ENCODE measurements at regions of chr1 and their contacts with region 1.

Region 1: DNA sequence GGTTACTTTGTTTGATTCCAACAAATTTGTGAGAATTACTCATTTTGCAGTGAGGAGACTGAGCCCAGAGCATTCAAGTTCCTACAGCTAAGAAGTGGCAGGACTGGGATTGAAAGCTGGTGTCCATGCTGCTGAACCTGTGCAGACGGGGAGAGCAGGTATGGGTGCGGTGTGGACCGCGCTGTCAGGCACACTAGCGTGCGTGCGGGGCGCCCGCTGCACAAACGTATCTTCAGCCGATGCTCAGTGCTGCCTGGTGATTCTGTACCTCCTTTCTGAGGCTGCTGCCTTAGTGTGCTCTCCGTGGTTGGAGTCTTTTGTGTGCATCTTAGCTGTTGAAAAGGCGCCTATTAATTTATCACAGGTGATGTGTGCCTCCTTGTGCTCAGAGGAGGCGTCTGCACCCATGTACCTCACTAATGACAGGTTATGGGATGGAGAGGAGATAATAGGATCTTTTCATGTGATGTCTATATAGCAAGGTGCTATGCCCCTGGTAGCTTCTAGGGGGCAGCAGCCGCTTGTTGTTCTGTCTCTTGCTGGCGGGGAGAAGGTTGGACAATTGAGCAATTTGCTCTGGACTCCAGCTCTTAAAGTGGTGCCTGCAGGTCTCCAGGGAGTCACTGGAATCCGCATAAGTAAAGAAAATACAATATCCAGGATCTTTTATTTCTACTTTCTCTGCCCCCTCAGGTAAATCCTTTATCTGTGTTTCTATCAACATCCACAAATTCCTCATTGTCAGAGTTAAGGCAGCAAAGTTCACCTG is 32.5 kb downstream of the PEX14 start:
- DNase-seq: peak; percentile 86
- H3K4me3 Mint-ChIP-seq: no peak overlapping the region
- H3K27ac Mint-ChIP-seq: no peak overlapping the region
- H3K4me1 Mint-ChIP-seq: peaks cover 17% of the 10 kb centered on the region
- H3K27me3 Mint-ChIP-seq: no peaks in the 10 kb centered on the region
- CTCF ChIP-seq: peak; percentile 83

Region 2: GRCh38 chr1:10522322-10522860 is 15.1 kb after region 1 on chr1:
- CTCF ChIA-PET with region 1: interaction called, 7 read pairs
- POLR2A ChIA-PET with region 1: interaction called, 14 read pairs
- intact Hi-C with region 1: no loop called
- DNase-seq: no peak
- H3K4me3 Mint-ChIP-seq: no peak overlapping the region
- H3K27ac Mint-ChIP-seq: no peak overlapping the region
- H3K4me1 Mint-ChIP-seq: peaks cover 4% of the 10 kb centered on the region
- H3K27me3 Mint-ChIP-seq: no peaks in the 10 kb centered on the region
- CTCF ChIP-seq: no peak

Region 3: GRCh38 chr1:10635085-10635896 is 128.0 kb after region 1 on chr1:
- CTCF ChIA-PET with region 1: interaction called, 3 read pairs
- POLR2A ChIA-PET with region 1: interaction called, 7 read pairs
- intact Hi-C with region 1: loop called (anchors 5 kb)
- DNase-seq: peak; percentile 93
- H3K4me3 Mint-ChIP-seq: peak overlapping the region; percentile 66
- H3K27ac Mint-ChIP-seq: peak overlapping the region; percentile 95
- H3K4me1 Mint-ChIP-seq: peaks cover 10% of the 10 kb centered on the region
- H3K27me3 Mint-ChIP-seq: no peaks in the 10 kb centered on the region
- CTCF ChIP-seq: no peak

Region 4: DNA sequence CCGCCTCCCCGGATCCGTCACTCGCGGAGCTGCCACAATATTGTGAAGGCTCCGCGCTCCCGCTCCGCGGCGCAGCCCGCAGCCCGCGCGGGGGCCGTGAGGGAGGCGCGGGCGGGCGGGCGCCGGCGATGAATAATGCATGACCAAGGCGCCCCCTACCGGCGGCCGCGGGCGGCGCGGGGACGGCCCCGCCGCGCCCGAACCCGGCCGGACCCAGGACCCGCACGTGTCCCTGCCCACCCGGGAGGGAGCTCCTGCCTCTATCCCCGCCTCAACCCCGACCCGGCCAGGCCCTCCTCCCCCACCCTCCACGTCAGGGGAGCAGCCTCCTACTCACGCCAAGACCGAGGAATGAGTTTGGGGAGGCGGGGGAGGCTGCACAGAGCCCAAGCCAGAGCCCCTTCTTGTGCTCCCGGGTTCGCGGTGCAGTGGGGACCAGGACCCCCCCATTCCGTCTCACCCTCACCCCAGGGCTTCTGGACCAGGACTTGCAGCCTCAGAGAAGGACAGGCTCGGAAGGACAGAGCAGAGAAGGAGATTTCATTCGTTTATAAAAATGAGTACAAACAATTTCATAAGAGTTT is 359.9 kb after region 1 on chr1:
- CTCF ChIA-PET with region 1: interaction called, 11 read pairs
- POLR2A ChIA-PET with region 1: no interaction called
- intact Hi-C with region 1: loop called (anchors 1 kb)
- DNase-seq: peak; percentile 36
- H3K4me3 Mint-ChIP-seq: peak overlapping the region; percentile 55
- H3K27ac Mint-ChIP-seq: no peak overlapping the region
- H3K4me1 Mint-ChIP-seq: peaks cover 6% of the 10 kb centered on the region
- H3K27me3 Mint-ChIP-seq: no peaks in the 10 kb centered on the region
- CTCF ChIP-seq: peak; percentile 85

Region 5: DNA sequence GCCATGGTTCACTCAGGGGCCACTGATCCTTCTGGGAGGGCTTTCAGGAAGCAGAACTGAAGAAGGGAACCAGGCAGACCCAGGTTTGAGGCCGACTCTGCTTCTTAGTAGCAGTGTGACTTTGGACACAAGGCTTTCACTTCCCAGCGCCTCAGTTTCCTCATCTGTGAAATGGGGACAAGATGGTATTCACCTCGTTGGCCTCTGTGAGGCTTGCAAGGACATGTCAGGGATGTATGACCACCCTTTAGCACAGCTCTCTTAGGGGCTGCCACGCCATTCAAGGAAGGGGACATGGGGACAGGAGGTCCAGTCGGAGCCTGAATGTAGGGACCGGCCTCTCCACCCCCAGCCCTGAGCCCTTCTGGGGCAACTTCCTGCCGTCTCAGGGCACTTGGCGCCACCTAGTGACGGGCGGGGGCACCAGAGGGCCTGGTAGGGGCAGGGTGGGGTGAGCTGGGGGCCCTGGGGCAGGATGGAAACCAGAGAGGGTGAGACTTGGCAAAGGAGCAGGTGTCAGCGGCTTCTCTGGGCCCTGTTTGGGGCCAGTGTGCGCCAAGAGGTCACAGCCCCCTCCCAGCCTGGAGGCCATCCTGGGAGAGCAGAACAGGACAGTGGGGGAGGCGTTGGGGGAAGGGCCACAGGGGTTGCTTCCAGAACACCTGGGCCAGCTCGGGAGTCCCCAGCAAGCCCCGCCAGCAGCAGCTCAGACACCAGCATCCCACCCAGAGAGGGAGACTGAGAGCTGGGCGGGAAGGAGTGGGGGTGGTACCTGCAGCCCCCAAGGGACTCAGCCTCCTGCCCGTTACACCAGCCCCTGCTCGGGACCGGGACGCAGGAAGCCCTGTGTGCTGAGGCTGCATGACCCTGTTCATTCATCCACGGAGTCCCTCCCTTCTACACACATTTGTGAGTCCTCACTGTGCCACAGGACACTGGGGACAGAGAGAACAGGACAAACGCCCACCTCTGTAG is 402.7 kb after region 1 on chr1:
- CTCF ChIA-PET with region 1: interaction called, 12 read pairs
- POLR2A ChIA-PET with region 1: interaction called, 4 read pairs
- intact Hi-C with region 1: loop called (anchors 2 kb)
- DNase-seq: peak; percentile 62
- H3K4me3 Mint-ChIP-seq: no peak overlapping the region
- H3K27ac Mint-ChIP-seq: no peak overlapping the region
- H3K4me1 Mint-ChIP-seq: peaks cover 7% of the 10 kb centered on the region
- H3K27me3 Mint-ChIP-seq: no peaks in the 10 kb centered on the region
- CTCF ChIP-seq: peak; percentile 80

Region 6: DNA sequence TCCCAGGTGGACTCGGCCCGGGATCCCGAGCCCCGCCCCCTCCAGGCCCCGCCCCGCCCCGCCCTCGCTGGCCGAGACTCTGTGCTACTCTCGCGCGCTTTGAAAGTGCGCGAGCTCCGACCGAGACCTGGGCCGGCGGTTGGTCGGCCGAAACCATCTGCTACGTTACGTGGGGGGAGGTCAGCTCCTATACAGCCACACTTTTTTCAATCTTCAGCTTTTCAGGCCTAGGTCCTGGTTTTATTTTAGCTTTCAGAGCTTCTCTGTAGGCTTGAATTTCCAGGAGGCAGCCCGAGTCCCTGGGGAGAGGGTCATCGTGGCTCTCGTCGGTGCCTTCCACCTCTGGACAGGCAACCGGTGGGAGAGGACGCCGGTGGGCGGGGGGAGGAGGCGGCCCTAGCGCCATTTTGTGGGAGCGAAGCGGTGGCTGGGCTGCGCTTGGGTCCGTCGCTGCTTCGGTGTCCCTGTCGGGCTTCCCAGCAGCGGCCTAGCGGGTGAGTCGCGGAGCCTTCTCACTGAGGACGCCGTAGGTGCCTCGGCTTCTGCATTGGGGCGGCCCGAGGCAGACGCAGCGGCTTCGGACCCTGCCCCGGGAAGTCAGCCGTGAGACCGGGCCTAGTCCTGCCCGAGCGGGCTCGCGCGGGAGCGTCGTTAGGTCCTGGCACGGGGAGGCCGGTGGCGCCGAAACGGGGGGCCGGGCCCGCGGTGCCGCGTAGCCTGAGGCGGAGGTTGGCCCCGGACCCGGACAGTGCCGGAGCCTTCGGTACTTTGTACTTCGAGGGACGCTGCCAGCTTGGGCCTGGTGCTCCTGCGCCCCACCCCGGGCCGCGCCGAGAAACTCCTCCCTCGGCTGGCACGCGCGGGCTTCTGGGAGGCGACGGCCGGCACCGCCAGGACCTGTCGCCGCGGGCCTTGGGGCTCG is 505.2 kb after region 1 on chr1 and contains the start of gene TARDBP:
- CTCF ChIA-PET with region 1: no interaction called
- POLR2A ChIA-PET with region 1: interaction called, 6 read pairs
- intact Hi-C with region 1: loop called (anchors 2 kb)
- DNase-seq: peak; percentile 89
- H3K4me3 Mint-ChIP-seq: peak within 1 kb of the TSS; percentile 83
- H3K27ac Mint-ChIP-seq: peak within 1 kb of the TSS; percentile 100
- H3K4me1 Mint-ChIP-seq: no peaks in the 10 kb centered on the region
- H3K27me3 Mint-ChIP-seq: no peaks in the 10 kb centered on the region
- CTCF ChIP-seq: no peak
- total RNA-seq, gene TARDBP: 144 and 172 TPM in 2 replicates

Measured in MCF 10A (cell line).